GM12878 (cell line): ENCODE measurements at regions of chr11 and their contacts with region 1.

Region 1: GRCh38 chr11:58524232-58525036 is 16.5 kb upstream of the OR5B21 start:
- DNase-seq: peak; percentile 39
- ATAC-seq: peak; percentile 68
- H3K4me3 ChIP-seq: peak overlapping the region; percentile 49; the same call in 1 of the 2 replicates
- H3K27ac ChIP-seq: peak overlapping the region; percentile 75
- H3K4me1 ChIP-seq: peaks cover 30% of the 10 kb centered on the region
- H3K27me3 ChIP-seq: no peaks in the 10 kb centered on the region
- CTCF ChIP-seq: peak; percentile 70 to 77 (median 72)
- EP300 ChIP-seq: no peak
- POLR2A ChIP-seq: peak; percentile 21; the same call in 1 of the 2 replicates
- RAD21 ChIP-seq: peak; percentile 72

Region 2: DNA sequence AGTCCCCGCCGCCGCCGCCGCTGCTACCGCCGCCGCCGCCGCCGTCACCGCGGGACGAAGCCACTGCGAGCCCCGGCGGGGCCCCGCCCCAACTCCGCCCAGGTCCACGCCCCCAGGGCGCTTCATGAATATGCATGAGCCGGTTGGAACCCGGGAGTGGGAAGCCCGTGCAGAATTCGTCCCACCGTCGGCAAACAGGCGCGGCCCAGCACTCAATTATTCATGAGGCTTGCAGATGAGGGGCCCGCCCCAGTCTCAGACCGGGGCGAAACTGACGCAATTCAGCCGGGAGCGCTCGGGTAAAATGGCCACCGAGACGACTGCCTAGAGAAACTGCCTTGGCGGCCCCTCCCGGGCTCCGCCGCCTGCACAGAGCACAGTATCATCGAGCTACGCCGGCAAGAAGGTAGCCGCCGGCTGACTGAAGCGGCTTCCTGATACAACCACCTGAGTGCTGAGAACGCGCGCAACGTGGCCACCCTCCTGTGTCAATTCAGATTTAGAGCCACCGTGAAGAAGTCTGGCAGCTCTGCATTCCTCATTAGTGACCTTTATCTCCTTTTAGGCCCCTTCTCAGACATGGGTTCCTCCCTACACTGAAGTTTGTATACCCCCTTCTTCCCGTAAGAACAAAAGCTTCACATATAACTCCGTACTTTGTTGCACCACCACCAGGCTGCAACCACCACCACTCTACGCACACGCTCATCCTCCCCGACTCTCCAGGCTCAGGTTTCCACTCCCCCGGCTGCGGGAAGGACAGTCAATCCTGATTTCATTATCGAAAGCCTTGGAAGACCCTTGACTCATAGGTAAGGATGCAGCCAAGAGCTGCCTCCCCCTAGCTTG is 1199.3 kb before region 1 on chr11 and contains the start of gene TNKS1BP1:
- CTCF ChIA-PET with region 1: no interaction called
- POLR2A ChIA-PET with region 1: no interaction called
- RAD21 ChIA-PET with region 1: no interaction called
- SMC1A ChIA-PET with region 1: no interaction called
- in situ Hi-C with region 1: loop called (anchors 25 kb)
- intact Hi-C with region 1: no loop called
- DNase-seq: peak; percentile 56
- ATAC-seq: peak; percentile 87
- H3K4me3 ChIP-seq: peak within 1 kb of the TSS; percentile 51
- H3K27ac ChIP-seq: peak within 1 kb of the TSS; percentile 81
- H3K4me1 ChIP-seq: peaks cover 22% of the 10 kb centered on the region
- H3K27me3 ChIP-seq: no peaks in the 10 kb centered on the region
- CTCF ChIP-seq: no peak
- EP300 ChIP-seq: no peak
- POLR2A ChIP-seq: peak; percentile 90
- RAD21 ChIP-seq: no peak
- polyA plus RNA-seq, gene TNKS1BP1: 0.26 to 0.47 TPM

Region 3: DNA sequence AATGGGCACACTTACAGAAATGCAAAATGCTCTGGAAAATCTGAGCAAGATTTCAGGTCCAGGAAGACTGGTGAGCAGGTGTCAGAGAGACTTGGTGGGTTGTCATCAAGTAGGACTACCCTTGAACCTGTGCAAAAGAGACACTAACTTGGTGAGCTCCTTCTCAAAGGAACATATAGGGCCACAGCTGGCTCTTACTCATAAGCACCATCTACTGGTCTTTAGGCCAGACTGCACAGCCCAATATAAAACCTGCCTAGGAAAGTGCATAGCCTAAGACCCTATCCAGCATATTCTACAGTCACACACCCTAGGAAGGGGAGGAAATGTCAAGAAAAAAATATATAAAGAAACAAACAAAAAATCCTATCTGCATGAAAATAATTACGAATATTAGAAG is 238.2 kb before region 1 on chr11:
- CTCF ChIA-PET with region 1: interaction called, 5 read pairs
- POLR2A ChIA-PET with region 1: no interaction called
- RAD21 ChIA-PET with region 1: no interaction called
- SMC1A ChIA-PET with region 1: no interaction called
- in situ Hi-C with region 1: no loop called
- intact Hi-C with region 1: loop called (anchors 5 kb)
- DNase-seq: no peak
- ATAC-seq: peak; percentile 89
- H3K4me3 ChIP-seq: no peak overlapping the region
- H3K27ac ChIP-seq: no peak overlapping the region
- H3K4me1 ChIP-seq: no peaks in the 10 kb centered on the region
- H3K27me3 ChIP-seq: no peaks in the 10 kb centered on the region
- CTCF ChIP-seq: peak; percentile 61 to 68 (median 62)
- EP300 ChIP-seq: no peak
- POLR2A ChIP-seq: no peak
- RAD21 ChIP-seq: peak; percentile 65

Region 4: DNA sequence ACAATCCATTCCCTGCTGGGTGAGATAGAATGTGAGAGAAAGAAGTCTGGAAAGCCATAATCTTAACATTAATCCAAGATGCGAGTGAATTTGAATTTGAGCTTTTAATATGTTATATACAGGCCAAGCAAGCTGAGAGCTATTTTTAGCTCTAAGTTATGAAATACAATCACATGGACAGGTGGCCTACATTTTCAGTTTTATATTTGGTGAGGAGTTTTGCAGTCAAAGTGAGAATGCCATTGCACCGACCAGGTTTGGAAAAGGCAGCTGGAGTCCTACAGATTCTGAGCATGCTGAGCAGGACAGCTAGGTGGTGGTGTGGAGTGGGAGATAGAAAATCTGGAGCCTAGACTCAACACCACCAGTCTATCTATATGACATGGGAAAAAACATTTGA is 28.5 kb before region 1 on chr11:
- CTCF ChIA-PET with region 1: interaction called, 8 read pairs
- POLR2A ChIA-PET with region 1: no interaction called
- RAD21 ChIA-PET with region 1: interaction called, 5 read pairs
- SMC1A ChIA-PET with region 1: interaction called, 20 read pairs
- in situ Hi-C with region 1: no loop called
- intact Hi-C with region 1: no loop called
- DNase-seq: no peak
- ATAC-seq: peak; percentile 63
- H3K4me3 ChIP-seq: no peak overlapping the region
- H3K27ac ChIP-seq: no peak overlapping the region
- H3K4me1 ChIP-seq: peaks cover 9% of the 10 kb centered on the region; the same call in 1 of the 2 replicates
- H3K27me3 ChIP-seq: no peaks in the 10 kb centered on the region
- CTCF ChIP-seq: peak in 1 of 3 experiments; percentile 15; a peak in 2 of 6 replicates
- EP300 ChIP-seq: no peak
- POLR2A ChIP-seq: no peak
- RAD21 ChIP-seq: no peak

Region 5: GRCh38 chr11:58503361-58503856 is 21.0 kb before region 1 on chr11:
- CTCF ChIA-PET with region 1: interaction called, 88 read pairs
- POLR2A ChIA-PET with region 1: no interaction called
- RAD21 ChIA-PET with region 1: interaction called, 14 read pairs
- SMC1A ChIA-PET with region 1: interaction called, 98 read pairs
- in situ Hi-C with region 1: no loop called
- intact Hi-C with region 1: loop called (anchors 2 kb)
- DNase-seq: peak; percentile 51
- ATAC-seq: peak; percentile 91
- H3K4me3 ChIP-seq: no peak overlapping the region
- H3K27ac ChIP-seq: no peak overlapping the region
- H3K4me1 ChIP-seq: peaks cover 6% of the 10 kb centered on the region; the same call in 1 of the 2 replicates
- H3K27me3 ChIP-seq: no peaks in the 10 kb centered on the region
- CTCF ChIP-seq: no peak
- EP300 ChIP-seq: peak in 1 of 2 experiments; percentile 84; a peak in 2 of 4 replicates
- POLR2A ChIP-seq: no peak
- RAD21 ChIP-seq: no peak

Region 6: GRCh38 chr11:58513747-58514367 is 10.6 kb before region 1 on chr11:
- CTCF ChIA-PET with region 1: interaction called, 88 read pairs
- POLR2A ChIA-PET with region 1: no interaction called
- RAD21 ChIA-PET with region 1: interaction called, 13 read pairs
- SMC1A ChIA-PET with region 1: interaction called, 98 read pairs
- in situ Hi-C with region 1: no loop called
- intact Hi-C with region 1: no loop called
- DNase-seq: no peak
- ATAC-seq: peak; percentile 84
- H3K4me3 ChIP-seq: no peak overlapping the region
- H3K27ac ChIP-seq: no peak overlapping the region
- H3K4me1 ChIP-seq: no peaks in the 10 kb centered on the region
- H3K27me3 ChIP-seq: no peaks in the 10 kb centered on the region
- CTCF ChIP-seq: peak; percentile 46 to 68 (median 62); a peak in 5 of 6 replicates
- EP300 ChIP-seq: no peak
- POLR2A ChIP-seq: no peak
- RAD21 ChIP-seq: peak; percentile 89

Region 7: DNA sequence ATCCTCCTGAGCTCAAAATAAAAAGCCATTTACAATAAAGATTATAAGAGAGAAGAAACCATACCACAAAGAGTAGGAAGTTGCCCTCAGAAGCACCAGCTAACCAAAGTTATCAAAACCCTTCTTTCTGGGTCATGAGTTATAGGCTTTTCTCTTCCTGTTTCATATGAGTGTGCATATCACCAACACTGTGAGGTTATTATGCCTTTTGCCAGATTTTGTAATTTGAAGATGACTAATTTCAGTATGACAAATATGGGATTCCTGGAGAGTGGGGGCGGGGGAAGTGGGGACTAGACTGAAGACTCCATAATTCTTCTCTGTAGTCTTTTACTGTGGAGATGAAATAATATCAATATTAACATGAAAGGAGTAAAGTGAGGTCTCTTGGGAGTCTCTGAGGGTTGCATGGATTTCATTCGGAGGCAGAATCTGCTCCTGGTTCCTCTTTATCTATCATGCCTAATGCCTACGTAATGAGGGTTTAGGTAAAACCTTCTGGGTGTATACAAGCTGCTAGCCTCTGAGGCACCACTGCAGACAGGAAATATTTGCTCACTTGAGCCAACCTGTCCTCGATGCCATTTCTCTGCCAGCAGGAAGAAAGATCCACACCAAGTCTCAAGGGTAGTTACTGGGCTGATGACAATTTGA is 49.1 kb after region 1 on chr11:
- CTCF ChIA-PET with region 1: interaction called, 20 read pairs
- POLR2A ChIA-PET with region 1: interaction called, 4 read pairs
- RAD21 ChIA-PET with region 1: interaction called, 23 read pairs
- SMC1A ChIA-PET with region 1: interaction called, 11 read pairs
- in situ Hi-C with region 1: no loop called
- intact Hi-C with region 1: loop called (anchors 1 kb)
- DNase-seq: no peak
- ATAC-seq: peak; percentile 41
- H3K4me3 ChIP-seq: peak overlapping the region; percentile 77
- H3K27ac ChIP-seq: peak overlapping the region; percentile 99
- H3K4me1 ChIP-seq: peaks cover 9% of the 10 kb centered on the region
- H3K27me3 ChIP-seq: no peaks in the 10 kb centered on the region
- CTCF ChIP-seq: no peak
- EP300 ChIP-seq: peak in 1 of 2 experiments; percentile 62; a peak in 3 of 4 replicates
- POLR2A ChIP-seq: peak; percentile 69
- RAD21 ChIP-seq: no peak

Region 8: DNA sequence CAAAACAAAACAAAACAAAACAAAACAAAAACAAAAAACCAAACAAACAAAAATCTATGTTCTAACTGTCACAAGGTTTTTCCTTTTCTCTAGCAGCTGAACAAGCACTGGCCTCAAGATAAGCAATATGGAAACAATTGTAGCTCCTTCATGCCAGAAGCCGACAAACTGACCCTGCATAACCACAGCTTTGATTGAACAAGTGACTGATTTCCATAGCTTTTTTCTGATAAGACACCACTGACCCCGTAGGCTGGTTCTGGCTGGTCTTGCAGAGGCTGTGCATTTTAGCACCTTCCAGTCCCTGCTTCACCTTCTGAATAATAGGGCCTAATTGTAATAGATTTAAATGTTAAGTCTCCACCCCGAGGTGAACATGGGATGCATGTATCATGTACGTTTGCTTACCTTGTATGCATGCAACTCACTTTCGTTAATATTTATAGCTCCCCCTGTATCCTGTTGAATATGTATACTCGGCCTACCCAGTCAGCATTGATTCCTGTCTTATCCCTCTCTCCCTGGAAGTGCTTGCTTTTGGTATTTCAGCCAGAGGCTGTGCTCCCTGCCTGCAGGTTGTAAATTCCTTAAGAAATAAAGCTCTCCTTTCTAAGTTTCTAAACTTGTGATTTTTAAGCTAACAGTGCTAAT is 147.7 kb after region 1 on chr11:
- CTCF ChIA-PET with region 1: no interaction called
- POLR2A ChIA-PET with region 1: no interaction called
- RAD21 ChIA-PET with region 1: no interaction called
- SMC1A ChIA-PET with region 1: no interaction called
- in situ Hi-C with region 1: no loop called
- intact Hi-C with region 1: no loop called
- DNase-seq: no peak
- ATAC-seq: no peak
- H3K4me3 ChIP-seq: no peak overlapping the region
- H3K27ac ChIP-seq: no peak overlapping the region
- H3K4me1 ChIP-seq: no peaks in the 10 kb centered on the region
- H3K27me3 ChIP-seq: no peaks in the 10 kb centered on the region
- CTCF ChIP-seq: no peak
- EP300 ChIP-seq: no peak
- POLR2A ChIP-seq: no peak
- RAD21 ChIP-seq: no peak